ENCODE measurements at regions of chr20 and their contacts with region 1.

Region 1: DNA sequence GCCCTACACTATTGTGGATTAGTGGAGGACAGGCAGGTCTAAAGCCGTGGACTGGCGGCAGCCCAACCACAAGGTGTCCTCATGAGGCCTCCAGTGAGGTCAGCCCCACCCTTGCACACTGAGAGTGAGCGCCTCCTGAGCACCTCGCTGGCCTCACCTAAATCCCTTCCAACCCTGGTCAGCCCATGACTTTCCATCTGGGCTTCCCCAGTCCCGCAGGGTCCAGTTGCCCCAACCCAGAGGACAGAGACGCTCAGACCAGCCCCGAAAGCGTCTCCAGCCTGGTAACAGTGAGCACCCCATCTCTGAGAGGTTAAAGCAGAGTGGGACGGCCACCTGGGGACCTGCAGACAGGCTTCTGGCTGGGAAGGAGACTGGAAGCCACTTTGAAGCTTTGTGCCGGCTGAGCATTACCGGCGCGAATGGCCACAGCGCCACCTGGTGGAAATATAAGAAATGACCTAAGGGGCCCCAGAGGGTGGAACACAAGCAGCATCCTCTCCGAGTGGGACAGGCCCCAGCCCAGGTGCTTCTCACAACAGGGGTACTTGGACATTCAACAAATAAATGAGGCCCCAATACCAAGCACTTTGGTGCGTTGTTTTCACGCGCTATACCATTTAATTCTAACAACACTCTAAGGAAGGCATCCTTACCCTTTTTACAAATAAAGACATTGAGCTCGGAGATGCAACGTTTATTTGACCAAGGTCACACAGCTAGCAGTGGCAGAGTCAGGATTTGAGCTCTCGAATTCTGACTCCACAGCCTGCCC is 65.7 kb upstream of the TOP1 start:
- DNase-seq: peak; percentile 63
- H3K4me3 Mint-ChIP-seq: no peak overlapping the region
- H3K27ac Mint-ChIP-seq: no peak overlapping the region
- H3K4me1 Mint-ChIP-seq: peaks cover 8% of the 10 kb centered on the region
- H3K27me3 Mint-ChIP-seq: peaks cover 15% of the 10 kb centered on the region

Region 2: DNA sequence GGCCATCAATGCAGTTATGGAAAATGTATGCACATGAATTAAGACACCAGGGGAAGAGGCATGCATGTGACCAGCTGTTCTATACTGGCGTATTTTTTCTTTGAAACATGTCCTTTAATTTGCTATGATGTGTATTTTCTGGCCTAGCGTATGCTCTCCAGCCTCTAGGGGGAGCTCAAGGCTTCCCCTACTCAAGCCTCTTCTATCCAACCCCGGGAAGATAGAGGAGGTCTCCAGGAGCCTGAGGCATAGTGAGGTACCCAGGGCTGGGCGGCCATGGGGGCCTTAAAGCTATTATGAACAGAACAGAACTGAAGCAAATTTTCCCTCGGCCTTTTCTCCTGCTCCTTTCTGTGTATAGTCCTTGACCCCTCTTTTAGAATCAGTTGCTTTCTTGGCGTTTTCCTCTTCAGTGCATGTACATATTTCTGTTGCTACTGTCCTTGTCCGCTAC is 802.8 kb before region 1 on chr20:
- intact Hi-C with region 1: loop called (anchors 5 kb)
- DNase-seq: peak; percentile 1
- H3K4me3 Mint-ChIP-seq: no peak overlapping the region
- H3K27ac Mint-ChIP-seq: no peak overlapping the region
- H3K4me1 Mint-ChIP-seq: no peaks in the 10 kb centered on the region
- H3K27me3 Mint-ChIP-seq: no peaks in the 10 kb centered on the region

Region 3: DNA sequence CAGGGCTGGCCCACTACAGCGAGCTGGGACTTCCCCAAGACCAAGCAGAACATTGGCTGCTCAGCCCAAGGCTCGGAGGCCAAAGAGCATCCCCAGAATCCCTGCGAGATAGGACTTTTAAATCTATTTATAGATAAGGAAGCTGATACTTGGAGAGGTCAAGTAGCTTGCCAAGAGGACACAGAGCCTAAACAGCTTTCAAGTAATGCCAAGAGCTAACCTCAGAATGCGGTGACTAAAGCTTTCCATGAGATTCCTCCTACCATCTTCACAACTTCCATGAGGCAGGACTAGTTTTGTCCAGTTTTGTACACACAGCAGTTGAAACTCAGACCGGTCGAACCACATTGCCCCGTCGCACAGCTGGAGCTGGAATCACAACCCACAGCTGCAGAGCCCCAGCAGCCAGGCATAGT is 102.4 kb before region 1 on chr20:
- intact Hi-C with region 1: no loop called
- DNase-seq: no peak
- H3K4me3 Mint-ChIP-seq: no peak overlapping the region
- H3K27ac Mint-ChIP-seq: no peak overlapping the region
- H3K4me1 Mint-ChIP-seq: no peaks in the 10 kb centered on the region
- H3K27me3 Mint-ChIP-seq: peaks cover 2% of the 10 kb centered on the region

Region 4: GRCh38 chr20:40990542-40991120 is 27.7 kb after region 1 on chr20:
- intact Hi-C with region 1: loop called (anchors 1 kb)
- DNase-seq: peak; percentile 57
- H3K4me3 Mint-ChIP-seq: no peak overlapping the region
- H3K27ac Mint-ChIP-seq: peak overlapping the region; percentile 71
- H3K4me1 Mint-ChIP-seq: peaks cover 44% of the 10 kb centered on the region
- H3K27me3 Mint-ChIP-seq: no peaks in the 10 kb centered on the region

Region 5: DNA sequence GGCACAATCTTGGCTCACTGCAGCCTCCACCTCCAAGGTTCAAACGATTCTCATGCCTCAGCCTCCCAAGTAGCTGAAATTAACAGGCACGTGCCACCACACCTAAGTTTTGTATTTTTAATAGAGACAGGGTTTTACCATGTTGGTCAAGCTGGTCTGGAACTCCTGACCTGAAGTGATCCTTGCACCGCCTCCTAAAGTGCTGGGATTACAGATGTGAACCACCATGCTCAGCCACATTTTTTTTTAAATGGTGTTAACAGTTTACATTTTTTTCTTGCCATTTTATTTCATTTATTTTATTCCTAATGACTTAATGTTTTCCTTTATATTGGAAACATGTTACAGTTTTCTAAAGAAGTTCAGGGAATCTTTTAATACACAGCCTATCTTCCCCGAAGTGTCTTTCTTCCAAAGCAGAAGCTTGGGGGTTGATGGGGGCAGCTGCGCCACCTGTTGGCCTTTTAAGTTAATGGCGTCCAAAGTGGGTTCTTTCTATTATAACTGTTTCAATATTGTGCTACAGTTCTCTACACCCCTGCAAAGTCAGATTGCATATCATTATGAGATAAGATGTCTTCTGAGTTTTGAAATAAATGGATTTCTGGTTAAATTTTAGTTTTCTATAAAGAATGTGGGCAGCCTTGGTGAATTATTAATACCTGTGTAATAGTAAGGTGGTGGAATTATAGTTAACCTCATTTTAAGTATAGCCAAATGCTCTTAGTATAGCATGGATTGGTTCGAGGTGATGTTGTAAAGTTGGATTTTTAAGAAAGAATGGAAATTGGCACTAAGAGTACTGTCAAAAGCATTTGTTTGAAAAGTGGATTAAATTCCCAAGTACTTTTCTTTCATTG is 132.4 kb after region 1 on chr20:
- intact Hi-C with region 1: loop called (anchors 1 kb)
- DNase-seq: peak; percentile 34
- H3K4me3 Mint-ChIP-seq: no peak overlapping the region
- H3K27ac Mint-ChIP-seq: no peak overlapping the region
- H3K4me1 Mint-ChIP-seq: peaks cover 13% of the 10 kb centered on the region
- H3K27me3 Mint-ChIP-seq: no peaks in the 10 kb centered on the region

Region 6: DNA sequence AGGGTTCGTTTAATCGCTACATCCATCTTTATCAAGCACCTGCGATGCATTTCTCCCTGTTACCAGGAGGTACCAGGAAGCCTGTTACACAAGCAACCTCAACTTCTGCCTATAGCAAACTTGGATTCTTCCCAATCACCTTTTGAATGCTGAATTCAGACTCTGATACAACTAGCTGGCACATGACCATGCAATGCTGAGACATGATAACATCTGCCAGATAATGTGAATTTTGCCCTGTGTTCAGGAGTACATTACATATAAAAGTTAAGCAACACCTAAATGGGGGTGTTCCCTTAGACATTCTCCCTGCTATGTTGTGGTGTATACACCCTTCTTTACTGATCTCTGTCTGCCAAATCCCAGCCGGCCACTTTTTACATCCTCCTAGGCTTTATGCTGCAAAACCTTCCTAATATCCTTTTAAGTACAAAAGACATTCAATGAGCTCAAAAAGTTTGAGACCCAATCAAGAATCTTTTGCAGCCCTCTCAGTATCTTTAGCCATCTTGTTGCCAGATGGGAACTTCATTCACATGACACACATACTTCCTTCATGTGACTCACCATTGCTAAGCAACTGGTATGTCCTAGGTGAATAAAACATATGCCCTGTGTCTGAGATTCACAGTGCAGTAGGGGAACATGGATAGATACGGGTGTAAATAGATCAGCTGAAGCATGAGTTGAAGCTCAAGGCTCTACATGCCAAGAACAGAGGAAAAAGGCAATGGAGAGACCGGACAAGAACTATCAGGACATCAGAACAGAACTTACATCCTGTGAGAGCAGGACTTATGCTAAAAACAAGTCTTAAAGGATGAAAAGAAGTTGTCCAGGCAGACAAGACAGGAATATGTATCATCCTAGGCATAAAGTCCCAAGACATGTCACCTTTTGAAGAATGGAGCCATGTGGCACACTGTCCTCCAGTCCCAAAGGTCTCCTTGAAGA is 270.3 kb after region 1 on chr20:
- intact Hi-C with region 1: loop called (anchors 1 kb)
- DNase-seq: no peak
- H3K4me3 Mint-ChIP-seq: no peak overlapping the region
- H3K27ac Mint-ChIP-seq: no peak overlapping the region
- H3K4me1 Mint-ChIP-seq: peaks cover 30% of the 10 kb centered on the region
- H3K27me3 Mint-ChIP-seq: no peaks in the 10 kb centered on the region

Measured in activated T-helper 1 cell treated with anti-CD3 and anti-CD28 coated beads, Interleukin-12 subunit alpha, Interleukin-12 subunit beta, Interleukin-2, Interleukin-4 antibody, amounts not matched to agents 30 ng/mL and 10 ng/mL and 1 ng/mL, durations not matched to agents 14 hours and 24 hours and 36 hours (primary cell).